Heart right ventricle (tissue), 16 donors: ENCODE measurements at regions of chr3 and their contacts with region 1.

Region 1: GRCh38 chr3:180989291-180990163 is at the start of gene DNAJC19:
- DNase-seq: peak; percentile 85 to 94
- ATAC-seq: peak; percentile 98 to 100 (median 99)
- H3K4me3 ChIP-seq: peak within 1 kb of the TSS; percentile 59 to 88 (median 79)
- H3K27ac ChIP-seq: peak within 1 kb of the TSS; percentile 79 to 91 (median 86)
- H3K4me1 ChIP-seq: peaks cover 0 to 33% (median 18%) of the 10 kb centered on the region in 9 donors
- H3K27me3 ChIP-seq: no peaks in the 10 kb centered on the region
- CTCF ChIP-seq: no peak
- total RNA-seq, gene DNAJC19: 64.9 to 132 (median 97.6) TPM

Region 2: GRCh38 chr3:180601688-180602666 is 387.6 kb before region 1 on chr3 and contains the start of gene TTC14:
- intact Hi-C with region 1: loop called in 2 of 10 experiments (anchors 10 kb)
- DNase-seq: peak; percentile 92 to 93
- ATAC-seq: peak; percentile 99 to 100 (median 100)
- H3K4me3 ChIP-seq: peak within 1 kb of the TSS; percentile 76 to 96 (median 91)
- H3K27ac ChIP-seq: peak within 1 kb of the TSS; percentile 14 to 93 (median 74)
- H3K4me1 ChIP-seq: peaks cover 0 to 22% (median 14%) of the 10 kb centered on the region in 9 donors
- H3K27me3 ChIP-seq: peaks cover 0 to 22% (median 0%) of the 10 kb centered on the region in 7 donors
- CTCF ChIP-seq: peak in 1 of 9 donors; percentile 4
- total RNA-seq, gene TTC14: 8.2 to 19.5 (median 11.3) TPM

Region 3: DNA sequence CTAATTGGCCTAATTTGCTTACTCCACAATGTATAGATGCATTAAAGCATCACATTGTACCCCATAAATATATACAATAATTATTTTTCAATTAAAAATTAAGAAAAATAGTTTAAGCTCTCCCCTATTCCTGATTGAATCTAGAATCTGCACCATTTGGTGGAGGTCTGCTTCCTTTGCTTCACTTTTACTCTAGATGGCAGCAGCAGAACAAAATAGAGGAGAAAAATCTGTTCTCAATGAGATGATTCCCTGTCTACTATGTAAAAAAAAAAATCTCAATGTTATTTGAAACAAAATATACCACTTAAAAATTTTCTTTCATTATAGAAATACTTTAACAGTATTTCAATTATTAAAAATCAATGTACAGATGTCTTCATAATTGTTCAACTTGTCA is 186.7 kb before region 1 on chr3:
- intact Hi-C with region 1: loop called in 1 of 10 experiments (anchors 10 kb)
- DNase-seq: no peak
- ATAC-seq: no peak
- H3K4me3 ChIP-seq: no peak overlapping the region
- H3K27ac ChIP-seq: no peak overlapping the region
- H3K4me1 ChIP-seq: peaks cover 0 to 13% (median 0%) of the 10 kb centered on the region in 9 donors
- H3K27me3 ChIP-seq: no peaks in the 10 kb centered on the region
- CTCF ChIP-seq: peak in 7 of 9 donors; percentile 49 to 71 (median 63)

Region 4: DNA sequence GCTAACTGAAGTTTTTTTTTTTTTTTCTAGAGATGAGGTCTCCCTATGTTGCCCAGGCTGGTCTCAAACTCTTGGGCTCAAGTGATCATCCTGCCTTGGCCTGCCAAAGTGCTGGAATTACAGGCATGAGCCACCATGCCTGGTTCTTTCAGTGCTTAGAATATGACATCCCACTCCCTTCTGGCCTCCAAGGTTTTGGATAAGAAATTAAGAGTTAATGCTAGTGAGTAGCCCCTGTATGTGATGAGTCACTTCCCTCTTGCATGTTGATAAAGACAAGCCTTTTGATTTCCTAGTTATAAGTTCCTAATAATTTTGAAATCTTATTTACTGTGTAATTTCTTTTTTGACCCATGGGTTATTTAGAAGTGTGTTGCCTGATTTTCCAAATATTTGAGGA is 35.7 kb after region 1 on chr3:
- intact Hi-C with region 1: no loop called
- DNase-seq: no peak
- ATAC-seq: no peak
- H3K4me3 ChIP-seq: no peak overlapping the region
- H3K27ac ChIP-seq: no peak overlapping the region
- H3K4me1 ChIP-seq: no peaks in the 10 kb centered on the region
- H3K27me3 ChIP-seq: no peaks in the 10 kb centered on the region
- CTCF ChIP-seq: no peak